BJ (cell line): ENCODE measurements at regions of chr3 and their contacts with region 1.

Region 1: DNA sequence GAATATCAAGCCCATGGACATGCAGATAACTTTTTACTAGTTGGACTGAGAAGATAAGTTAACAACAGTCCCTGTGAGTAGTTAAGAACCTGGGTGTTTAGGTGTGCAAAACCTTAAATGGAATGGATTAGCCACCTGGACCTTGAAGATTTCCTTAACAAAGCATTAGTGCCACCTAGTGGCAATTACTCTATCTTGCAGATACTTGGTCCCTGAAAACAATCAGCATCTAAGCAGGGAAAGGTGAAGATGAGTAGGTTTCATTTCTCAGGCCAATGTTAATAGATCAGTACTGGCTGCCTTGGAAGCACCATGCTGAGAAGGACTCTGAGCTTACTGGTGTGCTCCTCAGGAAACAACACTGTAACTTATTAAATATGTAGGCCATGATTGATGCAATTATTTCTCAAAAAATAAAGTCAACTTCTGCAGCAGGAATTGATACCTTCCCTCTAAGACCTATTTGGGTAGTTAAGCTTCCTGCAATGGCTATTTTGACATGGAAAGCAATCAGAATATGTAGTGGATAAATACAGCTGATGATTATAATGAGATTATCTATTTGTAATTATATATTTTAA is 329.4 kb downstream of the TBC1D5 start:
- DNase-seq: no peak
- H3K4me3 ChIP-seq: no peak overlapping the region
- H3K27me3 ChIP-seq: no peaks in the 10 kb centered on the region
- CTCF ChIP-seq: peak; percentile 77

Region 2: GRCh38 chr3:17258823-17259436 is 154.1 kb before region 1 on chr3:
- CTCF ChIA-PET with region 1: interaction called, 10 read pairs
- POLR2A ChIA-PET with region 1: no interaction called
- DNase-seq: no peak
- H3K4me3 ChIP-seq: no peak overlapping the region
- H3K27me3 ChIP-seq: no peaks in the 10 kb centered on the region
- CTCF ChIP-seq: peak; percentile 65